ENCODE measurements at regions of chr5 and their contacts with region 1.

Region 1: GRCh38 chr5:42423285-42424165 is at the start of gene GHR:
- DNase-seq: peak; percentile 86
- total RNA-seq, gene GHR: 10.4 TPM

Region 2: DNA sequence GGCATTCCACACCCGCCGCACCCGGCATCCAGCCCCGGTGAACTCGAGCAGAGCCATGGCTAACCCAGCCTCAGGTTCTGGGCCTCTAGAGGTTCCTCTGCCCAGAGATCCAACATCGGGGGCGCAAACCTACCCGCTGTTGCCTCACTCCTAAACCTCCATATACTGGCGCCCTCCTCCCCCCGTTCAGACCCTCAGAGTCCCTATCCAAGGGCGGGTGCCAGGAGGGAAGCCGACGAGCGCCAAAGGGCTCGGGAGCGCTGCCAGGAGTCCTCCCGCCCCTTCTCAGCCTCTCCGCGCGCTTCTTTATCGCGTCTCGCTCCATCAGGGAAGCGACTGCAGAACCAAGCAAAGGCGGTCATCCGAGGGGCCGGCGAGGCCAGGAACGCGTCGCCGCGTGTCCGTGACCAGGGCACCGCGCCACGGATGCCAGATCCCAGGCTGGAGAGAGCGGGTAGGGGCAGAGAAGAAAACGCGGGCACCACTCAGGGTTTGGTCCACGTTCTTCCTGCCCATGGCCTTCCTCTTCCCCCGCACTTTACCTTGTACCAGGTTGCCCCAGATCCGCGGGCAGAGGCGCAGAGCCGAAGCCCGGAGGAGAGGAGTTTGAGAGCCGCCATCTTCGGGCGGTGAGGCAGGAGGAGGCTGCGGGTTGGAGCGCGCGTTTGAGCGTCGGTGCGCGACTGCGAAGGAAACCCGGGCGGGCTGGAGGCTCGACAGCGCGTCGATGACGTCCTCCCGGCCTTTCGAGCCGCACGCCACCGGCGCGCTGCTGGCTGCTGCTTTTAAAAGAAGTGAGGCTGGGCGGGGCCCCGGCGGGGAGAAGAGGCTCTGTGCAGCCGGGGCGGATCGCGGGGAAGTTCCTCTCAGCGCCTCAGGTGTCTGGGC is 553.5 kb before region 1 on chr5 and contains the start of gene OXCT1:
- intact Hi-C with region 1: loop called (anchors 10 kb)
- DNase-seq: peak; percentile 93
- total RNA-seq, gene OXCT1: 269 TPM

Region 3: GRCh38 chr5:42507451-42508097 is 84.0 kb after region 1 on chr5:
- intact Hi-C with region 1: loop called (anchors 5 kb)
- DNase-seq: no peak

Region 4: DNA sequence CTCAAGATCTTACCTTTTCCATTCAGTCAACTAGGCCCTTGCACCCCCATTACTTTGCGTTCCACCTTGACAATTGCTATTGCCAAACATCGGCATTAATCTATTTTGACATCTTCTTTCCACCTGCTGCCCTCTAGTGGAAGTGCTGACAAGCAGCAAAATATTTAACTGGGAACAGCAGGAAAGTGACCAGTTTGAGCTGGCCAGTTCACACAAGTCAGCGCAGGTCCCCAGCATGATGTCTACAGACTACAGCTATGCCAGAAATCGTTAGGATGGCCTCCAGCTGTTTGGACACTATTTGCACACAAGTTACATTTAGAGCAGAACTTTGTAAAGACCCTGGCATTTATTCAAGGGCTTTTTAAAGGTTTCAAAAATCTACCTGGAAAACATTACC is 159.8 kb after region 1 on chr5:
- intact Hi-C with region 1: loop called (anchors 2 kb)
- DNase-seq: no peak

Region 5: GRCh38 chr5:42656651-42657015 is 233.1 kb after region 1 on chr5:
- intact Hi-C with region 1: loop called (anchors 5 kb)
- DNase-seq: no peak

Region 6: GRCh38 chr5:42680046-42680445 is 256.5 kb after region 1 on chr5:
- intact Hi-C with region 1: no loop called
- DNase-seq: no peak

Region 7: DNA sequence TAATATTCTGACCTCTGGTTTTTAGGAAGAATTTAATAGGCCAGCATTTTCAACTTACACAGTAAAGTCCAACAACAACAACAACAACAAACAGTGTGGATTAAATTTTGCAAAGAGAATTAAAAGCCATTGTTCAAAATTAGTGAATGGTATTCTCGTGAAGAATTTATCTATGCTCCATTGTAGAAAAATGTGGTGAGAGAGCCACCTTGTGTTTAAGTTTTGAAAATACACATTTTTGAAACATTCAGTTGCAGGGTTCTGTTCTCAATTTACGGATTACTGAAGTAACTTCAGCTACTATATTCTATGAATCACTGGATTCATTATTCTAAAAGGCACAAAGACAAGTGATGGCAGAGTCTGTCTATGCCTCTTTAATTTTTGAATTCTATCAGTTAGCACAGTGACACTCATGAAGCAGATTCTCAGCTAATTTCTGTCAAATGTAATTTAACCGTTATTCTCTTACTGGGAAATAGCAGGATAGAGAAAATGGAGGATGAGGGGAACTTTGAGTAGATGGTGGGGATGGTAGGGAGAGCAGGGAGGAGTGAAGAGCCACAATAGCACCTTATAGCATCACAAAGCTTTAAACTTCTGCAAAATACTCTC is 344.1 kb after region 1 on chr5:
- intact Hi-C with region 1: loop called (anchors 2 kb)
- DNase-seq: no peak

Region 8: DNA sequence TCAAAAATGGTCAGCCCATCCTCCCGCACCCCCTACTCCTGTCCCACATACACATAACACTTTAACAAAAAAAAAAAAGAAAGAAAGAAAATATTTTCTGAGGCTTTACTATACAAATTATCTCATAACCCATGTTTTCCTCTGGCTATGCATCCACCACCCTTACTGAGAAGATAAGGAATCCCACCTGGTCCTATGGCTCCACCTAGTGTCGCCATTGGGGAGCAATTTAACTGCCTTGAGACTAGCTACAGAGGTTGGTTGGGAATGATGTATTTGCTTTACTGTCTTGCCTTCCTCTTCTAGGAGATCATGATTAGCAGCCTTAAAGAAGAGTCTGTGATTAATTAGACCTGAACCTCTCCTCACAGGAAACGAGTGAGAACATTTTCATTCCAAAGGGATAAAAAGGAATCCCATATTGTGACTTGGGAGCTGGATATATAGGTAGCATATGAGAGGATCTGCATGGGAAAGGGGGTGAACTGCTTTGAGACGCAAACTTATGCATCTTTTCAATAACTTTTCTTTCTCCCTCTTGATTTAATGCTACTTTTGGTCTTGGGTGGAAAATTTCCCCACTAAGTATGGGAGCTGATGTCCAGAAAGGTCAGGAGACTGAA is 465.9 kb after region 1 on chr5:
- intact Hi-C with region 1: loop called (anchors 5 kb)
- DNase-seq: peak; percentile 78

Measured in cardiac septum (tissue), 1 donor.